ENCODE measurements at regions of chr10 and their contacts with region 1.

Region 1: DNA sequence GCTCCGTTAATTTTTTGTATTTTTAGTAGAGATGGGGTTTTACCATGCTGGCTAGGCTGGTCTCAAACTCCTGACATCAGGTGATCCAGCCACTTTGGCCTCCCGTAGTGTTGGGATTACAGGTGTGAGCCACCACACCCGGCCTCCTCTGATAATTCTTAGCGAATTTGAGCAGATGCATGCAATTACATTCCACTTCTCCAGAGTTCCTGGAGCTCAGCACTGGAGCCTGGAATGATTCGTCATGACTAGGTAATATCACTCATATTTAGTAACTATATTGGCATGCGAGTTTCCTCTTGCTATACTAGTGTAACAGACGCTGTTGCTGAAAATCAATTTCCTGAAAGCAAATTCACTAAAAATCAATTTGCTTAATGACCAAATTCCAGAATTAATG is 86.8 kb downstream of the MKX start:
- DNase-seq: no peak
- H3K4me3 ChIP-seq: no peak overlapping the region
- H3K27ac ChIP-seq: no peak overlapping the region
- H3K4me1 ChIP-seq: no peaks in the 10 kb centered on the region
- H3K27me3 ChIP-seq: no peaks in the 10 kb centered on the region
- CTCF ChIP-seq: no peak

Region 2: GRCh38 chr10:27446091-27446918 is 212.5 kb before region 1 on chr10:
- intact Hi-C with region 1: loop called (anchors 5 kb)
- DNase-seq: no peak
- H3K4me3 ChIP-seq: no peak overlapping the region
- H3K27ac ChIP-seq: no peak overlapping the region
- H3K4me1 ChIP-seq: no peaks in the 10 kb centered on the region
- H3K27me3 ChIP-seq: no peaks in the 10 kb centered on the region
- CTCF ChIP-seq: peak; percentile 17

Region 3: DNA sequence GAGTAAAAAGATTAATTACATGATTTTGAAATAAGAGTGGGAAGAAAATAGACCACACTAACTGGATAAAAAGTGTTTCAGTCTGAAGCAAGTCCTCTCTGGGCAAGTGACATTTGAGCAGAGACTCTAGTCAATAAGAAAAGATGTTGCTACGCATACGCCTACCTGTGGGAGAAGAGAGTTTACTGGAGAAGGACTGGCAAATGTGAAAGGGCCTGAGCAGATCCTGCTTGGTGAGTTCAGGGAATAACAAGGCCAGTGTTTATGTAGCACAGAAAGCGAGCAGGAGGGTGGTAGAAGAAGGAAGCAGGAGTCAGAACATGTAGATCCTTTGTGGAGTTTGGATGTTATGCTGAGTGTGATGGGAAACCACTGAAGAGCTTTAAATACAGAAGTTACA is 111.3 kb before region 1 on chr10:
- intact Hi-C with region 1: no loop called
- DNase-seq: no peak
- H3K4me3 ChIP-seq: no peak overlapping the region
- H3K27ac ChIP-seq: no peak overlapping the region
- H3K4me1 ChIP-seq: no peaks in the 10 kb centered on the region
- H3K27me3 ChIP-seq: no peaks in the 10 kb centered on the region
- CTCF ChIP-seq: no peak

Region 4: GRCh38 chr10:27558612-27559020 is 100.2 kb before region 1 on chr10:
- intact Hi-C with region 1: loop called (anchors 2 kb)
- DNase-seq: peak; percentile 69
- H3K4me3 ChIP-seq: no peak overlapping the region
- H3K27ac ChIP-seq: no peak overlapping the region
- H3K4me1 ChIP-seq: no peaks in the 10 kb centered on the region
- H3K27me3 ChIP-seq: no peaks in the 10 kb centered on the region
- CTCF ChIP-seq: peak; percentile 59